HCT116 (cell line): ENCODE measurements at regions of chrX and their contacts with region 1.

Region 1: GRCh38 chrX:19326567-19326966 is 17.2 kb upstream of the PDHA1 start:
- DNase-seq: no peak
- ATAC-seq: no peak
- H3K4me3 ChIP-seq: no peak overlapping the region
- H3K27ac ChIP-seq: no peak overlapping the region
- H3K4me1 ChIP-seq: no peaks in the 10 kb centered on the region
- H3K27me3 ChIP-seq: no peaks in the 10 kb centered on the region
- CTCF ChIP-seq: no peak
- POLR2A ChIP-seq: no peak
- RAD21 ChIP-seq: no peak

Region 2: DNA sequence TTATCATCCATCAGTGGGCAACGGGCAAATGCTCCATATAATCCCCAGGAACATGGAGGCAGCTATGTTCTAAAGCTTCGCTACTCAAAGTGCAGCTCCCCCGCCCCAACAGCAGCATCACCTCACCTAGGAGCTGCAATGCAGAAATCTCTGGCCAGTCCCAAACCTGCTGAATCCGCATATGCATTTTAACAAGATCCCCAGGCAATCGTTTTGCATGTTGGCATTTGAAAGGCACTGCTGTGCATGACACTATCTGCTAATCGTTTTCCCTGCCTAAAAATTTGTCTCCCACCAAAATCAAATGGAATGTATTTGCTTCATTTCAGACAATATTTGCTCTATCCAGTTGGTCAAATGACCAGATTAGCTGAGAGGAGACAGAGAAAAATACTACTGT is 219.5 kb before region 1 on chrX:
- CTCF ChIA-PET with region 1: no interaction called
- POLR2A ChIA-PET with region 1: no interaction called
- RAD21 ChIA-PET with region 1: no interaction called
- intact Hi-C with region 1: loop called (anchors 10 kb)
- DNase-seq: no peak
- ATAC-seq: no peak
- H3K4me3 ChIP-seq: no peak overlapping the region
- H3K27ac ChIP-seq: no peak overlapping the region
- H3K4me1 ChIP-seq: no peaks in the 10 kb centered on the region
- H3K27me3 ChIP-seq: no peaks in the 10 kb centered on the region
- CTCF ChIP-seq: no peak
- POLR2A ChIP-seq: no peak
- RAD21 ChIP-seq: no peak